ENCODE measurements at regions of chr7 and their contacts with region 1.

Region 1: GRCh38 chr7:151448261-151449252 is 8.6 kb upstream of the CRYGN start:
- DNase-seq: peak; percentile 69 to 90
- ATAC-seq: peak; percentile 90 to 92
- H3K4me3 ChIP-seq: peak overlapping the region; percentile 51
- H3K27ac ChIP-seq: peak overlapping the region; percentile 83 to 98
- H3K4me1 ChIP-seq: peaks cover 11% of the 10 kb centered on the region; the same call in 2 of the 3 replicates
- CTCF ChIP-seq: peak; percentile 90
- EP300 ChIP-seq: no peak
- POLR2A ChIP-seq: no peak; the same call in 1 of the 2 replicates
- RAD21 ChIP-seq: peak; percentile 90 to 96

Region 2: DNA sequence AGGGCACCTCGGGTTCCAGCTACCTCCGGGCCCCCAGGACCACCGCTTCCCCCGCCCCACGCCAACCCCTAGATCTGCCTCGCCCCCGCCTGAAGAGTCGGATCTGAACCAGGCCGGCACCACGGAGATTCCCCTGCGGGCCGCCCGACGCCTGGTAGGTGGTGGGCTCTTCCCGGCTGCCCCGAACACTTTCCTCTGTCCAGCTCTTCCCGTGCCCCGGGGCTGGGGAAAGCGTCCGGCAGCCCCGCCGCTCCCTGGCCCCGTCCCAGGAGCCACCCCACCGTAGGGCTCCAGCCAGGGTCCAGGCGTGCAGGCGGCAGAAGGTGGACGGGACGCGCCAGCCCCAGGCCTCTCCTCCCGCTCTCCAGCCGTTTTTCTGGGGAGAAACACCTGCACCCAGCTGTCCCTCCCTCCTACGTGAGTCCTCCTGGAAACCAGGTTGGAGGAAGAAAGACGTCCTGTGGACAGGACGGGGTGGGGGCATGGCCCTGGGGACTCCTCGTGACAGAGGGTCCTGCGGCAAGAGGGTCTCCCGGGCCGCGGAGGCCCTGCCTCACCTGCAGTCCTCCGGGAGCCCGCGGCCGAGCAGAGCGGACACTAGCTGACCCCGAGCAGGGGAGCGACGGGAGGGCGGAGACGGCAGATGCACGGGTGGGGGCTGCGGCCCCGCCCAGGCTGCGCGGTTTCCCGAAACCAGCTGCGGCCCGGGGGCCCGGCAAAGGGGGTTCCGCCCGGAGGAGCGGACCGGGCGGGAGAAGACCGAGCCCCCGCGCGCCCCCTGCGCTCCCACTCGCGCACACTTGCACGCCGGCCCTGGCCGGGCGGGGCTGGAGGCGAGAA is 648.6 kb before region 1 on chr7 and contains the start of gene TMEM176B:
- CTCF ChIA-PET with region 1: no interaction called
- POLR2A ChIA-PET with region 1: no interaction called
- DNase-seq: no peak
- ATAC-seq: peak in 1 of 2 experiments; percentile 25; a peak in 2 of 6 replicates
- H3K4me3 ChIP-seq: no peak within 1 kb of the TSS
- H3K27ac ChIP-seq: no peak within 1 kb of the TSS
- H3K4me1 ChIP-seq: no peaks in the 10 kb centered on the region
- CTCF ChIP-seq: no peak
- EP300 ChIP-seq: no peak
- POLR2A ChIP-seq: no peak
- RAD21 ChIP-seq: no peak
- polyA plus RNA-seq, gene TMEM176B: 0.10 and 0.26 TPM in 2 replicates

Region 3: DNA sequence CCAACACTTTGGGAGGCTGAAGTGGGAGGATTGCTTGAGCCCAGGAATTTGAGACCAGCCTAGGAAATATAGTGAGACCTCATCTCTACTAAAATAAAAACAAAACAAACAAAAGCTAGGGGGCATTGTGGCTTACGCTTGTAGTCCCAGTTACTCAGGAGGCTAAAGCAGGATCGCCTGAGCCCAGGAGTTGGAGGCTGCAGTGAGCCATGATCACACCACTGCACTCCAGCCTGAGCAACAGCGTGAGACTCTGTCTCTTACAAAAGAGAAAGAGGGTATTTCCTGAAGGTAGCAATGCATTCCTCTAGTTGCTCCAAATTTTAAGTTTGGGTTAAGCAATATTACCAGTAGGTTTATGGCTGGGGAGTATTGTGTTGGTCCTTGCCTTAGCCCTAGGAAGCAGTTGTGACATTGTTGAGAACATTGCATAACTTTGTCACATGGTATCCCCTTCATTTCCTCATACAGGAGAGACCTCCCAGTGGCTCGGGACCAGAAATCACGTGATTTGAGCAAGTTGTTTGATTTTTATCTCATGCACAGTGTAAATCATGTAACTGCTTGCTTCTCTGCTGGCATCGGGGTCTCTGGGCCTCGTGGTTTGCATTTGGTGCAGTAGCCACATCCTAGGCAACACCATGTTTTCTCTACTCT is 176.7 kb before region 1 on chr7:
- CTCF ChIA-PET with region 1: no interaction called
- POLR2A ChIA-PET with region 1: no interaction called
- DNase-seq: peak in 1 of 2 experiments; percentile 33
- ATAC-seq: no peak
- H3K4me3 ChIP-seq: no peak overlapping the region
- H3K27ac ChIP-seq: no peak overlapping the region
- H3K4me1 ChIP-seq: peaks cover 16% of the 10 kb centered on the region; the same call in 2 of the 3 replicates
- CTCF ChIP-seq: no peak
- EP300 ChIP-seq: no peak
- POLR2A ChIP-seq: no peak
- RAD21 ChIP-seq: no peak

Region 4: DNA sequence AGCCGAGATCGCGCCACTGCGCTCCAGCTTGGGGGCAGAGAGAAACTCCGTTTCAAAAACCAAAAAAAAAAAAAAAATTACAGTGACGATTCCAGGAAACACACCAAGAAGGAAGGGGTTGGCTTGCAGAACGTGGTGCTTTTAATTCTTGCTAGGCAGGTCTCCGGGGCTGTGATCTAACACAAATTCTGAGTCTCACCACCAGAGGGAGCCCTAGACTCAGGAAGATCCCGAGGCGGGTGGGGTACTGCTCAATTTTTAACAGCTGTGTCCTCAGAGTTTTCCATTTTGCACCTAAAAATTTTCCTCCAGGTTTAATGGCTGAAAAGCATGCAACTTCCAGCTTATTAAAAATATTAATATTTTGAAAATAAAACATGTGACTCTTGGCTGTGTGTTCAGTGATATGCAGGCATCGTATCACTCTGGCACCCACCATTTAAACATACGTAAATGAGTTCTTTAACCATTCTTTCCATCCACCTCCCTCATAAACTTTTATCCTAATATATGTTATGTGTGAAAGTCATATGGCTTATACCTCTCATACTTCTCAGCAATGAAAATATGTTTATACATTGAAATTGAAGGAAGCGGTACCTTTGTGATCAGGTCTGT is 133.4 kb before region 1 on chr7:
- CTCF ChIA-PET with region 1: interaction called, 45 read pairs
- POLR2A ChIA-PET with region 1: no interaction called
- DNase-seq: peak; percentile 70 to 78
- ATAC-seq: peak; percentile 82 to 93; a peak in 5 of 6 replicates
- H3K4me3 ChIP-seq: no peak overlapping the region
- H3K27ac ChIP-seq: no peak overlapping the region
- H3K4me1 ChIP-seq: 0 out of 3 replicates have a peak, but pooled peaks cover 3% of the 10 kb centered on the region
- CTCF ChIP-seq: peak; percentile 93
- EP300 ChIP-seq: no peak
- POLR2A ChIP-seq: no peak
- RAD21 ChIP-seq: peak; percentile 84 to 90

Region 5: GRCh38 chr7:151368136-151368571 is 80.4 kb before region 1 on chr7:
- CTCF ChIA-PET with region 1: interaction called, 438 read pairs
- POLR2A ChIA-PET with region 1: interaction called, 4 read pairs
- DNase-seq: peak; percentile 76 to 77
- ATAC-seq: peak; percentile 99 to 100
- H3K4me3 ChIP-seq: no peak overlapping the region
- H3K27ac ChIP-seq: peak overlapping the region in 1 of 2 experiments; percentile 32; a peak in 1 of 6 replicates
- H3K4me1 ChIP-seq: peaks cover 4% of the 10 kb centered on the region
- CTCF ChIP-seq: peak; percentile 90
- EP300 ChIP-seq: no peak
- POLR2A ChIP-seq: no peak
- RAD21 ChIP-seq: peak; percentile 85 to 89

Region 6: GRCh38 chr7:151393031-151393977 is 55.3 kb before region 1 on chr7:
- CTCF ChIA-PET with region 1: interaction called, 16 read pairs
- POLR2A ChIA-PET with region 1: no interaction called
- DNase-seq: no peak
- ATAC-seq: no peak
- H3K4me3 ChIP-seq: no peak overlapping the region
- H3K27ac ChIP-seq: peak overlapping the region in 1 of 2 experiments; percentile 60; a peak in 1 of 6 replicates
- H3K4me1 ChIP-seq: 0 out of 3 replicates have a peak, but pooled peaks cover 4% of the 10 kb centered on the region
- CTCF ChIP-seq: no peak
- EP300 ChIP-seq: no peak
- POLR2A ChIP-seq: no peak
- RAD21 ChIP-seq: no peak

Region 7: DNA sequence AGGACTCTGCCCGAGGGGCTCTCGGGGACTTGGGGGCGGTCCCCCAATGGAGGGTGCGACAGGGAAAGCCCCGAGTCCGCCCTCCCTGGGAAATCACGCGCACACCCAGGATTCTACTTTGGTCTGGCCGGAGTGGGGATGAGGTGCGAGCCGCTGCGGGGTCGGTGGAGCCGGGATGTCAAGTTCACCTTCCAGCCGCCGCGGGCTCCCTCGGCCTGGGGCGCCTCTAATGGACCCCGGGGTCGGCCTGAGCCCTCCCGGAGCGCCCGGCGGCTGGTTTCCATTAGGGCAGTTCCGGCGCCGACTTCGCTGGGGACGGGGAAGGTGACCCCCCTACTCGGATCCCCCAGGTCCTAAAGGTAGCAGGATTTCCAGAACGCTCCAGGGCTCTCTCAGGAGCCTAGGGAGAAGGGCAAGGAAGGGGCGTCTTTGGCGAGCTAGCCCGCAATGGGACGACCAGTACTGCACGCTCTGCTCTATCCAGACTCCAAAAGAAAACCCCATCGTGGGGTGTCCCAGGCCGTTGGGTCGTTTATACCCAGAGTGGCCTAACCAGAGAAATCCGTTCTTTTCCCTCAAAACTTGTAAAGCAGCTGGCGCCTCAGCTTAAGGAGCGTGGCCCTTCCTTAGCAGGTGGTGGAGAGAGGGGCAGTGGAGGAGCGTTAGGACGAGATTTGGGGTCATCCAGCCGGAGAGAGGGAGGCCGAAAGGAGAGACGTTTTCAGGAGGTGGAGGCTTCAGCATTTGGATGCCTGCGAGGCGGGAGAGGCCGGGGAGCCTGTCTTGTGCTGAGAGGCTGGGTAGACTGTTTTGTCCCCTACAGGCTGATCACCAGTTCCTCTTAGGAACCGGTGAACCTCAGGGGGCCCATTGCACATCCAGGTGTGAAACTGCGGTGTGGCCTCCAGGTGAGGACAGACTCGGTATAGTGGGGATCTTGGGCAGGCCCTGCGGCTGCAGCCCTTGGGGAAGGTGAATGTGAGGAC is 37.9 kb before region 1 on chr7:
- CTCF ChIA-PET with region 1: interaction called, 19 read pairs
- POLR2A ChIA-PET with region 1: no interaction called
- DNase-seq: no peak
- ATAC-seq: peak; percentile 58 to 63; a peak in 4 of 6 replicates
- H3K4me3 ChIP-seq: peak overlapping the region; percentile 46
- H3K27ac ChIP-seq: peak overlapping the region; percentile 60 to 86
- H3K4me1 ChIP-seq: peaks cover 15% of the 10 kb centered on the region; the same call in 1 of the 3 replicates
- CTCF ChIP-seq: no peak
- EP300 ChIP-seq: no peak
- POLR2A ChIP-seq: no peak
- RAD21 ChIP-seq: no peak

Region 8: GRCh38 chr7:151429548-151430331 is 18.8 kb before region 1 on chr7:
- CTCF ChIA-PET with region 1: interaction called, 73 read pairs
- POLR2A ChIA-PET with region 1: no interaction called
- DNase-seq: peak in 1 of 2 experiments; percentile 36
- ATAC-seq: no peak
- H3K4me3 ChIP-seq: no peak overlapping the region
- H3K27ac ChIP-seq: peak overlapping the region; percentile 24 to 85; a peak in 4 of 6 replicates
- H3K4me1 ChIP-seq: peaks cover 53% of the 10 kb centered on the region
- CTCF ChIP-seq: no peak
- EP300 ChIP-seq: no peak
- POLR2A ChIP-seq: no peak
- RAD21 ChIP-seq: no peak

Region 9: DNA sequence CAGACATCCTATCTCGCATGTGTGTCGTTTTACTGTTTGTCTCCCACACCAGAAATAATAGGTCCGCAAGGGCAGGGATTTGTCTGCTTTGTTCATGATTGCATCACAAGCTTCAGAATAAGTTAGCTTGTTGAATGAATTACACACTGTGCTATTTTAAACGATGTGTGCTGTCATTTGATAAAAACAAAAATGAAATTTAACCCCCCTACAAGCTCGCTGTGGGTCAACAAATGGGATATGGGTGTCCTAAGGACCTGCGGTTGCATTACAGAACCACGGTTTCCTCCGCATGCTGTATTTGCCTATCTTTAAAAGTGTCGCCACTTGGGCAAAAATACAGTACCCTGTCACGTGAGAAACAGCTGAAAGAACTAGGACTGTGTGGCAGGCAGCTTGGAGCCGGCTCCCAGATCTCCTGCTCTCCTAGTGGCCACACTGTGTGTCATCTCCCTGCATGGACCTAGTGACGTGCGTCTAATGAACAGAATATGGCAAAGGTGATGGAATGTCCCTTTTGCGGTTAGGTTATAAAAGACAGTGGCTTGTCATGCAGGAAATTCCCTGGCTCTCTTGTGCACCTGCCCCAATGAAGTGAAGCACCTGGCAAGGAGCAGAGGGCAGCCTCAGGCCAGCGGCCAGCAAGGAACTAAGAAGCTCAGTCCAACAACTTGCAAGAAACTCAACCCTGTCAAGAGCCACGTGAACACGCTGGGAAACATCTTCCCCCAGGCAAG is 24.3 kb after region 1 on chr7:
- CTCF ChIA-PET with region 1: interaction called, 10 read pairs
- POLR2A ChIA-PET with region 1: no interaction called
- DNase-seq: no peak
- ATAC-seq: 0 out of 6 replicates have a peak, but pooled peaks of 1 of the 2 experiments have one; percentile 20
- H3K4me3 ChIP-seq: no peak overlapping the region
- H3K27ac ChIP-seq: no peak overlapping the region
- H3K4me1 ChIP-seq: no peaks in the 10 kb centered on the region
- CTCF ChIP-seq: no peak
- EP300 ChIP-seq: no peak
- POLR2A ChIP-seq: no peak
- RAD21 ChIP-seq: no peak

Region 10: DNA sequence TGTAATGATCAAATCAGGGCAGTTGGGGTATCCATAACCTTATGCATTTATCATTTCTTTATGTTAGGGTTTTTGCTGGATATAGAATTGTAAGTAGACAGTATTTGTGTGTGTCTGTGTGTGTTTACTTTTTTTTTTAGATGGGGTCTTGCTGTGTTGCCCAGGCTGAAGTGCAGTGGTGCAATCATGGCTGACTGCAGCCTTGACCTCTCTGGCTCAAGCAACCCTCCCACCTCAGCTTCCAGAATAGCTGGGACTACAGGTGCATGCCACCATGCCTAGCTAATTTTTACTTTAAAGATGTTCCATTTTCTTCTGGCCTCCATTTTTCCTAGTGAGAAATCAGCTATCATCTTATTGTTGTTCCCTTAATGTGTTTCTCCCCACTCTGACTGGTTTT is 81.3 kb after region 1 on chr7:
- CTCF ChIA-PET with region 1: no interaction called
- POLR2A ChIA-PET with region 1: no interaction called
- DNase-seq: no peak
- ATAC-seq: no peak
- H3K4me3 ChIP-seq: no peak overlapping the region
- H3K27ac ChIP-seq: no peak overlapping the region
- H3K4me1 ChIP-seq: no peaks in the 10 kb centered on the region
- CTCF ChIP-seq: no peak
- EP300 ChIP-seq: no peak
- POLR2A ChIP-seq: no peak
- RAD21 ChIP-seq: no peak

Region 11: GRCh38 chr7:151566897-151567320 is 118.4 kb after region 1 on chr7:
- CTCF ChIA-PET with region 1: no interaction called
- POLR2A ChIA-PET with region 1: no interaction called
- DNase-seq: no peak
- ATAC-seq: no peak
- H3K4me3 ChIP-seq: no peak overlapping the region
- H3K27ac ChIP-seq: no peak overlapping the region
- H3K4me1 ChIP-seq: no peaks in the 10 kb centered on the region
- CTCF ChIP-seq: no peak
- EP300 ChIP-seq: no peak
- POLR2A ChIP-seq: no peak
- RAD21 ChIP-seq: no peak

Measured in A549 (cell line).